ENCODE measurements at regions of chr20 and their contacts with region 1.

Region 1: GRCh38 chr20:12090920-12091319 is 173.2 kb downstream of the BTBD3 start:
- DNase-seq: no peak
- ATAC-seq: peak in 1 of 4 donors; percentile 58
- H3K4me3 ChIP-seq: no peak overlapping the region
- H3K27ac ChIP-seq: no peak overlapping the region
- H3K4me1 ChIP-seq: no peaks in the 10 kb centered on the region
- H3K27me3 ChIP-seq: no peaks in the 10 kb centered on the region
- CTCF ChIP-seq: no peak
- POLR2A ChIP-seq: no peak

Region 2: GRCh38 chr20:11676630-11677284 is 414.2 kb before region 1 on chr20:
- intact Hi-C with region 1: no loop called
- DNase-seq: peak; percentile 26 to 58 (median 48)
- ATAC-seq: peak in 3 of 4 donors; percentile 90 to 95 (median 90)
- H3K4me3 ChIP-seq: no peak overlapping the region
- H3K27ac ChIP-seq: no peak overlapping the region
- H3K4me1 ChIP-seq: peaks cover 0 to 22% (median 0%) of the 10 kb centered on the region in 12 donors
- H3K27me3 ChIP-seq: no peaks in the 10 kb centered on the region
- CTCF ChIP-seq: peak; percentile 72 to 92 (median 81)
- POLR2A ChIP-seq: no peak

Region 3: GRCh38 chr20:11952639-11953038 is 138.3 kb before region 1 on chr20:
- intact Hi-C with region 1: loop called in 1 of 10 experiments (anchors 10 kb)
- DNase-seq: no peak
- ATAC-seq: no peak
- H3K4me3 ChIP-seq: no peak overlapping the region
- H3K27ac ChIP-seq: no peak overlapping the region
- H3K4me1 ChIP-seq: no peaks in the 10 kb centered on the region
- H3K27me3 ChIP-seq: no peaks in the 10 kb centered on the region
- CTCF ChIP-seq: no peak
- POLR2A ChIP-seq: no peak

Region 4: DNA sequence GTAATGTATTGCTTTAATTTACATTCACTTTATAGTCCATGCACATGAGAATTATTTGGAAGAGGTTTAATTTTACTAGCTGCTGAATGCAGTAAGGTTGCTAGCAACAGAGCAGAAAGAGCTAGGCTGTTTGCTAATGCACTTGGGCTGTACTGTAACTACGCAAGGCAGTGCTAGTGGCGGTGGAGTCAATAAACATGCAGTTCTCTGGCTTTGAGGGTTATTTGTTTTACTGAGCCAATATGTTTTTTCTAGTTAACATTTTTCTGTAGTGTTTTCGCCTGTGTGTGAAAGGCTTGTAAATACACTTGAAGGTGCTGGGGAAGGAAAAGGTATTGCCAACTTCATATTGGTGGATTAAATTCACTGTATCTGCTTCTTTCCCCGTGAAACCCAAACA is 60.5 kb before region 1 on chr20:
- intact Hi-C with region 1: loop called in 1 of 10 experiments (anchors 10 kb)
- DNase-seq: no peak
- ATAC-seq: no peak
- H3K4me3 ChIP-seq: no peak overlapping the region
- H3K27ac ChIP-seq: no peak overlapping the region
- H3K4me1 ChIP-seq: no peaks in the 10 kb centered on the region
- H3K27me3 ChIP-seq: no peaks in the 10 kb centered on the region
- CTCF ChIP-seq: no peak
- POLR2A ChIP-seq: no peak

Region 5: DNA sequence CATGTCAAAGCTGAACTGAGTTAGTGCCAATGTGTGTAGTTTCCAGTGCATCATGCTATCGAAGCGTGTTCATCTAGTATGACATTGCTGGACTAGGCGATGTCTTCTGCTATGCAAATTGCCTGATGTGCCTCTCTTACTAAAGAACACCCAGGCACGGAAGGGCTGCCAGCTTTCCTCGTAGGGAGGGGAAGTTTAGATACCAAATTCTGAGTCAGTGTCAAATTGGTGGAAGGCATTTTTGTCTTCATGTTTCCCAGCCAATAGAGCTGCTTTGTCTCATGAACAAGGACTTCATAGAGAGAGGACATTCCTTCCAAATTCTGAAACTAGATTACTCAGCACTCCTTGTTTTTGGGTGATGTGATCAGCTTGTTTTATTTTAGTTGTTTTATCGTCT is 146.9 kb after region 1 on chr20:
- intact Hi-C with region 1: no loop called
- DNase-seq: peak in 2 of 5 donors; percentile 33 to 38
- ATAC-seq: peak in 2 of 4 donors; percentile 24 to 52
- H3K4me3 ChIP-seq: peak overlapping the region in 1 of 12 donors; percentile 12
- H3K27ac ChIP-seq: no peak overlapping the region
- H3K4me1 ChIP-seq: peaks cover 0 to 9% (median 0%) of the 10 kb centered on the region in 12 donors
- H3K27me3 ChIP-seq: no peaks in the 10 kb centered on the region
- CTCF ChIP-seq: no peak
- POLR2A ChIP-seq: no peak